Right ventricle myocardium superior (tissue), 1 donor: ENCODE measurements at regions of chr10 and their contacts with region 1.

Region 1: GRCh38 chr10:116385994-116386809 is 41.4 kb upstream of the PNLIPRP3 start:
- DNase-seq: no peak
- ATAC-seq: no peak

Region 2: DNA sequence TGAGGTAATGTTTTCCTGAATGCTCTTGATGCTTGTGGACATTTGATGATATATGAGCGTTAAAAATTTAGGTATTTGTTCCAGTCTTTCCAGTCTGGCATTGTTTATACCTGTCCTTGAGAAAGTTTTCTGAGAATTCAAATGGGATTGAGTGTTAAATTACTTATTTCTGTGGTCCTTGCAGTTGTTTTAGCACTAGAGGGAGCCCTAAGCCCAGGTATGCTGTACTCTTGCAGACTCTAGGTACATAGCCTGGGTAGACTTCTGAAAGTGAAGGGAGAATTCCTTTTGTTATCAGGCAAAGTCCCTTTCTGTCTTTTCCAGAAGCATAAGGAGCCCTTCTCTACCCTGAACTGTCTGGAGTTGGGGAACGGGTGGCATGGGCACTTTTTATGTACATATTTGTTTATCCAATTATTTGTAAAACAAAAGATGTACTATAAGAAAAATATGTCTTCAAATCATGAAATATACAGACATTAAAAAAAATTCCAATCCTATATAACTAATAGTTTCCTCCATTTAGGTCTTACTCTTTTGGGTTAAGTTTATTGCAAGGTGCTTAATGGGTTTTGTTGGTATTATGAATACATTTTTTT is 1030.9 kb before region 1 on chr10:
- intact Hi-C with region 1: loop called (anchors 5 kb)
- DNase-seq: no peak
- ATAC-seq: no peak

Region 3: GRCh38 chr10:115790220-115790619 is 596.0 kb before region 1 on chr10:
- intact Hi-C with region 1: loop called (anchors 10 kb)
- DNase-seq: no peak
- ATAC-seq: no peak